ENCODE measurements at regions of chr2 and their contacts with region 1.

Region 1: DNA sequence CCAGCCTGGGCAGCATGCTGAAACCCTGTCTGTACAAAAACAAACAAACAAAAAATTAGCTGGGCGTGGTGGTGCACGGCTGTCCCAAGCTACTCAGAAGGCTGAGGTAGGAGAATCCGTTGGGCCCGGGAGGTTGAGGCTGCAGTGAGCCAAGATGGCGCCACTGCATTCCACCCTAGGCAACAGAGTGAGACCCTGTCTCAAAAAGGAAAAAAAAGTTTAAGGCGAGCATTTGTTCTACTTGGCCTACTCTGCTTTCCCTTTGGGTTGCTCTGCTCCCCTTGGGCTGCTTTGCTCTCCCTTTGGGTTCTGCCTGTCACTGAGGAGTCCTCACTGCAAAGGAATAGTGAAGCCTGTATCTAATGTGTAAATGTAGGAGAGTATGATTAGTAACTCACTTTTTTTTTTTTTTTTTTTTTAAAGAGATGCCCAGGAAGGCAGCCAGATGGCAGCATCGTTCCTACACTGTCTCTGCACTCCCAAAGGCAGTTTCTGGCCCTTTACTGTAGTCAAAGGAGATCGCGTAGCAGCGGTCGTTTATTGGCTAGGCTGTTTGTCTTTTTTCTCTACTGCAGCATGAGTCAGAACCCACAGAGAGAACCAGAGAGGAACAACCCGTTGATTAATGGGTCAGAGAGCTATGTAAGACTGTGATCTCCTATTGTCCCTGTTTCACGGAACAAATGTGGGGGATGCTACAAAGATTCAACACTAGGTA is 118.3 kb upstream of the CWC22 start:
- DNase-seq: peak; percentile 97
- ATAC-seq: peak; percentile 92
- H3K4me3 ChIP-seq: peak overlapping the region; percentile 17; the same call in 1 of the 2 replicates
- H3K27ac ChIP-seq: peak overlapping the region; percentile 25
- H3K4me1 ChIP-seq: peaks cover 18% of the 10 kb centered on the region
- H3K27me3 ChIP-seq: no peaks in the 10 kb centered on the region
- CTCF ChIP-seq: peak; percentile 80

Region 2: GRCh38 chr2:180075870-180076269 is 49.5 kb before region 1 on chr2:
- CTCF ChIA-PET with region 1: no interaction called
- POLR2A ChIA-PET with region 1: no interaction called
- intact Hi-C with region 1: no loop called
- DNase-seq: peak; percentile 12
- ATAC-seq: peak; percentile 77
- H3K4me3 ChIP-seq: no peak overlapping the region
- H3K27ac ChIP-seq: no peak overlapping the region
- H3K4me1 ChIP-seq: 0 out of 2 replicates have a peak, but pooled peaks cover 7% of the 10 kb centered on the region
- H3K27me3 ChIP-seq: no peaks in the 10 kb centered on the region
- CTCF ChIP-seq: no peak

Region 3: DNA sequence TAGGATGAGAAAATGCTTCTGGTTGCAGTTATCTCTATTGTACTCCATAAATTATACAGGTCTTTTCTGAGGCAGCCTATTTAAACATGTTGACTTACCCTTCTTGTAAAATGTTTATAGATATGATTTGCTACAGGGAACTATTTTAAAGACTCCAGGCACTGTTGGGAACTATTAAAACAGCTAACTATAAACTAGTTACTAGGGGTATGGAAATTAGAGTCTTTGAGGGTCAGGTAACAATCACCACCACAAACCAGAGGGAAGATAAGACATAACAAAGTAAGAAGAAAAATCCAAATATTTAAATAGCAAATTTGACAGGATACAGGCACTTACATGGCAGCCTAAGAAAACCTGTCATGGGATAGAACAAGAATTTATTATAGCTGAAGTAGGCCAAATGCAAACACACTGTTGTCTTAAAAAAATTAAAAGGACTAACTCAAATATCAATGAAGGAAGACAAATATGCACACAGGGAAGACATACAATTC is 132.7 kb after region 1 on chr2:
- CTCF ChIA-PET with region 1: no interaction called
- POLR2A ChIA-PET with region 1: no interaction called
- intact Hi-C with region 1: loop called (anchors 1 kb)
- DNase-seq: peak; percentile 62
- ATAC-seq: peak; percentile 83
- H3K4me3 ChIP-seq: no peak overlapping the region
- H3K27ac ChIP-seq: peak overlapping the region; percentile 84
- H3K4me1 ChIP-seq: peaks cover 28% of the 10 kb centered on the region
- H3K27me3 ChIP-seq: no peaks in the 10 kb centered on the region
- CTCF ChIP-seq: no peak

Region 4: DNA sequence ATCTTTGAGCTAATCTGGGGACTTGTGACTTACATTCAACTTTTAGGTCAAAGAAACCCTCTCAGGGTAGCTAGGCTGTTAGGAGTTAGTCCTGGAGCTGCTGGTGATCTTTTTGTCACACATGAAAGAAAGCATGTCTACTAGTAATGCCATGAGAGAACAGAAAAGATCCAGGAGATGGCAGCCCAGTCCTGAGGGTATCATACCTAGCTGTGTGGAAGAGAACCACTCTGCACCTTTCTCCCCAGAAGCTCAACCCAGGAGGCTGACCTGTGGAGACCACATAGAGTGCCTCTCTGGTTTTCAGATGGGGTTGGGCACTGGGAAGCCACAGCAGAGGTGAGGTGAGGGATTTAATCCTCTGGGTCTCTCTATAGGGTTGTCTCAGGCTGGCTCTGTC is 394.8 kb after region 1 on chr2:
- CTCF ChIA-PET with region 1: interaction called, 9 read pairs
- POLR2A ChIA-PET with region 1: interaction called, 8 read pairs
- intact Hi-C with region 1: loop called (anchors 1 kb)
- DNase-seq: peak; percentile 56
- ATAC-seq: peak; percentile 32
- H3K4me3 ChIP-seq: no peak overlapping the region
- H3K27ac ChIP-seq: peak overlapping the region; percentile 96
- H3K4me1 ChIP-seq: peaks cover 73% of the 10 kb centered on the region
- H3K27me3 ChIP-seq: no peaks in the 10 kb centered on the region
- CTCF ChIP-seq: peak; percentile 52

Region 5: GRCh38 chr2:180728928-180729559 is 603.6 kb after region 1 on chr2:
- CTCF ChIA-PET with region 1: interaction called, 3 read pairs
- POLR2A ChIA-PET with region 1: interaction called, 4 read pairs
- intact Hi-C with region 1: loop called (anchors 10 kb)
- DNase-seq: peak; percentile 90
- ATAC-seq: peak; percentile 76
- H3K4me3 ChIP-seq: peak overlapping the region; percentile 50
- H3K27ac ChIP-seq: peak overlapping the region; percentile 96
- H3K4me1 ChIP-seq: peaks cover 57% of the 10 kb centered on the region
- H3K27me3 ChIP-seq: no peaks in the 10 kb centered on the region
- CTCF ChIP-seq: no peak

Region 6: DNA sequence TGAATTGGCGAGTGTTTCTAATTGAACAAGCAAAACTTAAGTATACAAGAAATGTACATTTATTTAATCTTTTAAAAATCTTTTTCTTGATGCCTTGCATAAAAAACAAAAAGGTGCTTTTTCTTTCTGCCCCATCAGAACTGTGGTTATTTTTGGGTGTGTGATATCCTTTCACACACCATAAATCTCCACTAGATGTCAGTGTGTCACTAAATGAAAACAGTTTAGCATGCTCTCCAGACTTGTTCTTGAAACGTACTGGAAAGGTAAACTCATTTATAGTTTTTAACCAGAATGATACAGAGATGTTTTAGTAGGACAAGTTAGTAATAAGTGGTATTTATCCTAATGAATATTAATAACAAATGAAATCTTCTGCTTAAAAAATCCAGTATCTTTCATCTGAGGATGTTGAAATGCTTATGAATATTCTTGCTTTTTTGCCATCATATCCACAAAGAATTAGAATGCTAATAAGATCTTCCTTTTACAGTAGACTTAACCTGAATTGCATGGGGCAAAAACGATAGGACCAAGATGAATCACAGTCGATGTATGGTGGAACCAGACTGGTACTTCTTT is 951.8 kb after region 1 on chr2:
- CTCF ChIA-PET with region 1: no interaction called
- POLR2A ChIA-PET with region 1: no interaction called
- intact Hi-C with region 1: loop called (anchors 1 kb)
- DNase-seq: peak; percentile 74
- ATAC-seq: peak; percentile 89
- H3K4me3 ChIP-seq: no peak overlapping the region
- H3K27ac ChIP-seq: no peak overlapping the region
- H3K4me1 ChIP-seq: no peaks in the 10 kb centered on the region
- H3K27me3 ChIP-seq: no peaks in the 10 kb centered on the region
- CTCF ChIP-seq: peak; percentile 82

Region 7: DNA sequence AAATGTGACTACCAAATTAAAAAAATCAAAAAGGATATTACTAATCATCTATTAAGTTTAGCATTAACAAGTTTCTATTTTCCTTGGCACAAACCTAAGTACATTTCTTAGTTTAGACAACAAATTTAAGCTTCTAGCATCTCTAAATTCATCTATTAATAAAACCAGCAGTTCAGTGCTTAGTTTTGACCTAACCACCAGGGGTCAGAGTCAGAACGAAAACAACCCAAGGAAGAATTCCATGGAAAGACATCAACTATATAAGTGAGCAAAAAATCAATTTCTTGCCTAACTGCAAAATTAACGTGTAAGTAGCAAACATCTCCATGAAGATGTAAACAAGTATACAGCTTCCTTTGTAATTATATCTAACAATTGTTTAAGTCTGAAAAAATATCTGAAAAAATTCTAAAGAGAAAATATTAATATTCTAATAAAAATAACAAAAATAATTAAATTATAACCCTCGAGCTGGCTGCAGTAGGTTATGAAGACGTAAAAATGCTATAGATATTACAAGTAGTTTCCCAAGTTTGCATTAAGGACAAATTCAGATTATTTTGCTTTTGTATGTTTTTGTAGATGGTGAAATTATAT is 1447.8 kb after region 1 on chr2:
- CTCF ChIA-PET with region 1: no interaction called
- POLR2A ChIA-PET with region 1: no interaction called
- intact Hi-C with region 1: loop called (anchors 5 kb)
- DNase-seq: peak; percentile 65
- ATAC-seq: no peak; the same call in 1 of the 2 replicates
- H3K4me3 ChIP-seq: no peak overlapping the region
- H3K27ac ChIP-seq: no peak overlapping the region
- H3K4me1 ChIP-seq: 0 out of 2 replicates have a peak, but pooled peaks cover 7% of the 10 kb centered on the region
- H3K27me3 ChIP-seq: no peaks in the 10 kb centered on the region
- CTCF ChIP-seq: peak; percentile 75

Measured in PC-3 (cell line).